Endothelial cell of umbilical vein (primary cell): ENCODE measurements at regions of chr1 and their contacts with region 1.

Region 1: GRCh38 chr1:178310685-178311105 is 186.1 kb downstream of the CLEC20A start:
- DNase-seq: peak; percentile 70
- H3K4me3 ChIP-seq: no peak overlapping the region
- H3K27ac ChIP-seq: no peak overlapping the region
- H3K4me1 ChIP-seq: no peaks in the 10 kb centered on the region
- H3K27me3 ChIP-seq: no peaks in the 10 kb centered on the region
- CTCF ChIP-seq: peak; percentile 50 to 56
- POLR2A ChIP-seq: no peak

Region 2: DNA sequence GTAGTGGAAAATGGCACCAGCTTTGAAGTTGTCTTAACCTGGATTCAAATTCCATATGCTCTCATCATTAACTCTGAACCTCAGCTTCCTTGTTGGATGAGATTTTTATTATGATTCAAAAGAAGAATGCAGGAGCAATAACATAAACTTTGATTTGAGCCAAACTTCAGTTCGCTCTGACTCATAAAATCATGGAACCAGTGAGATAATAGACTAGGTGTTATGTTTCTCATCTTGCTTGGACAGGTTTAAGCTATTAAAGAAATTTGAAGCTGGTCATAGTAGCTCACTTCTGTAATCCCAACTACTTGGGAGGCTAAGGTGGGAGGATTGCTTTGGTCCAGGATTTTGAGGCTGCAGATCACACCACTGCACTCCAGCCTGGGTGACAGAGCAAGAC is 13.3 kb after region 1 on chr1:
- CTCF ChIA-PET with region 1: interaction called, 13 read pairs
- POLR2A ChIA-PET with region 1: no interaction called
- dilution Hi-C with region 1: no loop called
- intact Hi-C with region 1: no loop called
- DNase-seq: no peak
- H3K4me3 ChIP-seq: no peak overlapping the region
- H3K27ac ChIP-seq: no peak overlapping the region
- H3K4me1 ChIP-seq: no peaks in the 10 kb centered on the region
- H3K27me3 ChIP-seq: no peaks in the 10 kb centered on the region
- CTCF ChIP-seq: no peak
- POLR2A ChIP-seq: no peak

Region 3: GRCh38 chr1:178434360-178434759 is 123.7 kb after region 1 on chr1:
- CTCF ChIA-PET with region 1: interaction called, 10 read pairs
- POLR2A ChIA-PET with region 1: no interaction called
- dilution Hi-C with region 1: no loop called
- intact Hi-C with region 1: no loop called
- DNase-seq: no peak
- H3K4me3 ChIP-seq: no peak overlapping the region
- H3K27ac ChIP-seq: no peak overlapping the region
- H3K4me1 ChIP-seq: no peaks in the 10 kb centered on the region
- H3K27me3 ChIP-seq: no peaks in the 10 kb centered on the region
- CTCF ChIP-seq: no peak
- POLR2A ChIP-seq: no peak

Region 4: DNA sequence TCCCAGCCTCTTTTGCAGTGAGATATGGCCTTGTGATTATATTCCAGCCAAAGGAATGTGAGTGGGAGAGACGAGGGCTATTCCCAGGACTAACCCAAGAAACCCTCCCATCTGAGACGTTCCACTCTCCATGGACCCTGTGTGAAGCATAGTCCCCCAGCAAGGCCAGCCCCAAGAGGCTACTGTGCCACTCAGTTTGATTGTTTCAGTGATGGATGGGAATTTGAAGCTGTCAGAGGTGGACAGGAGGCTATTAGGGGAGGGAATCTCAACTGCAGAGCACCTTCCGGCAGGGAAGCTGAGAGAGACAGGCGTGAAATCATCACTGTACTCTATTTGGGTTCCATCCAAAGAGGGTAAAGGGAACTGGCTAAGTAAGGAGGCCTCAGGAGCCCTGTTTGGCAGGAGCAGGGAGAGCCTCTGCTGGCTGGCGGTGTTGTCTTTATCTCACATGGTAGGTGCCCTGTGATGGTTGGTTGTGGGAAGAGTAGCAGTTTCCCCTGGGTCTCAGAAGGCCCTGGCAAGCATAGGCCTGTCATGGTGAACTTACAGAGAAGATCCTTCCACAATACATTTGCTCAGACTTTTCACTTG is 198.8 kb after region 1 on chr1:
- CTCF ChIA-PET with region 1: interaction called, 240 read pairs
- POLR2A ChIA-PET with region 1: no interaction called
- dilution Hi-C with region 1: no loop called
- intact Hi-C with region 1: no loop called
- DNase-seq: no peak
- H3K4me3 ChIP-seq: no peak overlapping the region
- H3K27ac ChIP-seq: no peak overlapping the region
- H3K4me1 ChIP-seq: no peaks in the 10 kb centered on the region
- H3K27me3 ChIP-seq: peaks cover 0 to 1% of the 10 kb centered on the region in 2 experiments
- CTCF ChIP-seq: no peak
- POLR2A ChIP-seq: no peak